Activated CD8-positive, alpha-beta T cell treated with anti-CD3 and anti-CD28 coated beads for 36 hours (primary cell): ENCODE measurements at regions of chr7 and their contacts with region 1.

Region 1: GRCh38 chr7:151110941-151111645 is 24.8 kb downstream of the AGAP3 start:
- DNase-seq: peak; percentile 83
- ATAC-seq: peak; percentile 74
- H3K4me3 Mint-ChIP-seq: no peak overlapping the region
- H3K27ac Mint-ChIP-seq: no peak overlapping the region
- H3K4me1 Mint-ChIP-seq: peaks cover 4% of the 10 kb centered on the region
- H3K27me3 Mint-ChIP-seq: peaks cover 17% of the 10 kb centered on the region
- CTCF ChIP-seq: peak; percentile 91

Region 2: DNA sequence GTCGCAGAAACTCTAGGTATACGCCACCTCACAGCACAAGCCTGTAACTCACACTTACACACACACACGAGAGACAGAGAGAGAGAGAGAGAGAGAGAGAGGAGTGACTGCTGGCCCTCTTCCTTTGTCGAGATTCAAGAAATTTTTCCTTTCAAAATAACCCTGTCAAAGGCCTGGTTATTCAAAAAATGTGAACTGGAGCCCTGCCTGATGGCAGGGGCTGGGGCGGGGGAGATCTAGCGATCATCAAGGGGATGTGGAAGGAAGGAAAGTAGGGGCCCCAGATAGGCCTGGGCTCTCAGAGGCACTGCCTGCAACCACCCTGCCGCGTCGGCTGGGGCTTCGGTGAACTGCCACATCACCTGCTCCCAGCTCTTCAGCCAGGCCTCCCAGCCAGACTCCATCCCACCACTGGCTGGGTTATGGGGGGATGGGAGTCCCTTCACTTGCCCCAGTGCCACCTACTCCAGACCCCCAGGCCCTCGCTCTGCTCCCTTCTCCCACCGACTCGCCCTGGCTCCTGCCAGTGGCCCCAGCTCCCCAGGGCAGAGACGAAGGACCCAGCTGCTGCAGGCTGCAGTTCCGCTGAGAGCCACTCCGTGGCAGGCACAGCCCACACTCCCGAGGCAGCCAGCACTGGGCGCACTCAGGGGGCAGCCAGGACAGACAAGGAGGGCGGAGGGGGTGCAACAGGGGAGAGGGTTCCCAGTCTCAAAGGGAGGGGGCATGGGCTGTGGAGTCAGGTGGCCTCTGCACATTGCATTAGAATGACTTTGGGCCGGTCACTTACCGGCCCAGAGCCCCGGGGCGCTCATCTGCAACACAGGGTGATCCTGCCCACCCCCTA is 148.3 kb before region 1 on chr7:
- CTCF ChIA-PET with region 1: interaction called, 18 read pairs
- POLR2A ChIA-PET with region 1: no interaction called
- intact Hi-C with region 1: no loop called
- DNase-seq: peak; percentile 69
- ATAC-seq: peak; percentile 98
- H3K4me3 Mint-ChIP-seq: no peak overlapping the region
- H3K27ac Mint-ChIP-seq: no peak overlapping the region
- H3K4me1 Mint-ChIP-seq: peaks cover 2% of the 10 kb centered on the region
- H3K27me3 Mint-ChIP-seq: peaks cover 16% of the 10 kb centered on the region
- CTCF ChIP-seq: peak; percentile 90

Region 3: GRCh38 chr7:151017953-151018420 is 93.1 kb before region 1 on chr7:
- CTCF ChIA-PET with region 1: interaction called, 16 read pairs
- POLR2A ChIA-PET with region 1: no interaction called
- intact Hi-C with region 1: no loop called
- DNase-seq: peak; percentile 89
- ATAC-seq: peak; percentile 71
- H3K4me3 Mint-ChIP-seq: peak overlapping the region; percentile 79
- H3K27ac Mint-ChIP-seq: peak overlapping the region; percentile 75
- H3K4me1 Mint-ChIP-seq: peaks cover 52% of the 10 kb centered on the region
- H3K27me3 Mint-ChIP-seq: peaks cover 10% of the 10 kb centered on the region
- CTCF ChIP-seq: peak; percentile 99

Region 4: GRCh38 chr7:151057989-151058780 is 52.9 kb before region 1 on chr7:
- CTCF ChIA-PET with region 1: interaction called, 10 read pairs
- POLR2A ChIA-PET with region 1: no interaction called
- intact Hi-C with region 1: no loop called
- DNase-seq: peak; percentile 99
- ATAC-seq: peak; percentile 95
- H3K4me3 Mint-ChIP-seq: peak overlapping the region; percentile 95
- H3K27ac Mint-ChIP-seq: peak overlapping the region; percentile 89
- H3K4me1 Mint-ChIP-seq: peaks cover 35% of the 10 kb centered on the region
- H3K27me3 Mint-ChIP-seq: no peaks in the 10 kb centered on the region
- CTCF ChIP-seq: no peak

Region 5: GRCh38 chr7:151095123-151095797 is 15.8 kb before region 1 on chr7:
- CTCF ChIA-PET with region 1: interaction called, 25 read pairs
- POLR2A ChIA-PET with region 1: no interaction called
- intact Hi-C with region 1: no loop called
- DNase-seq: no peak
- ATAC-seq: no peak
- H3K4me3 Mint-ChIP-seq: no peak overlapping the region
- H3K27ac Mint-ChIP-seq: no peak overlapping the region
- H3K4me1 Mint-ChIP-seq: no peaks in the 10 kb centered on the region
- H3K27me3 Mint-ChIP-seq: no peaks in the 10 kb centered on the region
- CTCF ChIP-seq: no peak

Region 6: DNA sequence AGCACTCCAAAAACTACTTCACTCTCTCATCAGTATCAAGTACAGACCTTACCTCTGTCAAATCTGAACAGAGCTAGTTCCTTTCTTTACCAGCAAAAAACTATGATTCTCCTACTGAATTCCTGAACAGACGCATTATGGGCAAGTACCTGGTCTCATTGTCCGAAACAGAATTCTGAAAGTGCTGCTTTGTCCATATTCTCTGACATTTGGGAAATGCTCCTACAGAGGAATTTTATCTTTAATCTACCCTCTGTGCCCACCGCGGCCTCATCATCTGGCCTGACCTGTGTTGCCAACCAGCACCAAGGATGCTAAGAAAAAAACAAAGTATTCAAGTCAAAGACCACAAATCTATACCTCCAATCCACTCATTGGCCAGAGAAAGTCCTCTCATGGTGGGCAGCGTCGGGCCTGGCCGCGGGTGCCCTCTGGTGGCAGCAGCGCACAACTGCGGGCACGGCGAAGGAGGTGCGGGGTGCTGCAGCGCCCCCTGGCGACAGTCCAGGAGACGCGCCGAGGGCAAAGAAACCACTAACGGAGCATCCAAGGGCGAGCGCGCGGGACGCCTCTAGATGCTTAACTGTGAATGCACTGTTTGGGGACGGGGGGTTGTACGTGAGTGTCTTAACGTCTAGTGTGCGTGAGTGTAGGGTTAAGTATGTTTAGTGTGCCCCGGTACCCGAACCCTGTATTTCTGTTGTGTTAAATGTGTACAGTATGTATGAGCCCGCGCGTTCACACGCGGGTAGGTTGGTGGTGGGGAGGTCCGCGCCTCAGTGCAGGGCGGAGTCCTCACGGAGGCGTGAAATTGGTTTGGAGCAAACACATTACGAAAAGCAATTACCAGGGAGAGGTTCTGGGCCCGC is 61.4 kb after region 1 on chr7:
- CTCF ChIA-PET with region 1: interaction called, 11 read pairs
- POLR2A ChIA-PET with region 1: interaction called, 3 read pairs
- intact Hi-C with region 1: no loop called
- DNase-seq: peak; percentile 84
- ATAC-seq: peak; percentile 88
- H3K4me3 Mint-ChIP-seq: no peak overlapping the region
- H3K27ac Mint-ChIP-seq: no peak overlapping the region
- H3K4me1 Mint-ChIP-seq: peaks cover 3% of the 10 kb centered on the region
- H3K27me3 Mint-ChIP-seq: peaks cover 53% of the 10 kb centered on the region
- CTCF ChIP-seq: peak; percentile 100